ENCODE measurements at regions of chr7 and their contacts with region 1.

Region 1: GRCh38 chr7:28020302-28020940 is 160.2 kb downstream of the JAZF1 start:
- DNase-seq: peak; percentile 73
- H3K4me3 ChIP-seq: no peak overlapping the region
- H3K27ac ChIP-seq: no peak overlapping the region
- H3K4me1 ChIP-seq: peaks cover 6% of the 10 kb centered on the region
- H3K27me3 ChIP-seq: no peaks in the 10 kb centered on the region
- CTCF ChIP-seq: peak; percentile 89 to 92

Region 2: DNA sequence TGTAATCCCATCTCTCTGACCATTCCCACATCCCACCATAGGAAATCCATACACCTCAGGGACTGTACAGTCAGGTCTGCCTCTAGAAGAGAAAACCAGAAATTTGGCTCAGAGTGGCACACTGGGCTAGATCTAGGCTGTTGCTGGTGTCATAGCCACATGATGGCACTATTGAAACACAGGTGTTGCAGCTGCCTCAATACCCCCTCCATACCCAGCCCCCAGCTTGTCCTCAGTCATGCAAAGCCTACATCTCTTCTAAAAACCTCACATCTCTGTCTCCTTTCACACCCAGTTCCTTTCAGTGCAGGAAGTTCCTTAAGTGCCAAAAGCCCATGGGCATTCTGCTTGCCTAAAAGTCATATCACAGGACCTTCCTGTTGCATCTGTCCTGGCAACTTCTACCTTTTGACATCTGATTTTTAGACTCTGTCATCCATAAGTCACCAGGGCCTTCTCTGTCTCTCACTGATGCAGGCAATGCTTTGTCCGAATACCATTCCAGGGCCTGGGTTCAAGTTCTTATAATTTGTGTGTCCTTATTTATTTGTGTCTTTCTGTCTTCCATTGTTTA is 330.7 kb before region 1 on chr7:
- CTCF ChIA-PET with region 1: no interaction called
- dilution Hi-C with region 1: no loop called
- in situ Hi-C with region 1: no loop called
- intact Hi-C with region 1: loop called (anchors 1 kb)
- DNase-seq: peak; percentile 32
- H3K4me3 ChIP-seq: no peak overlapping the region
- H3K27ac ChIP-seq: no peak overlapping the region
- H3K4me1 ChIP-seq: peaks cover 6% of the 10 kb centered on the region
- H3K27me3 ChIP-seq: no peaks in the 10 kb centered on the region
- CTCF ChIP-seq: peak; percentile 40 to 60

Region 3: GRCh38 chr7:27745064-27745583 is 275.3 kb before region 1 on chr7:
- CTCF ChIA-PET with region 1: no interaction called
- dilution Hi-C with region 1: no loop called
- in situ Hi-C with region 1: no loop called
- intact Hi-C with region 1: loop called (anchors 1 kb)
- DNase-seq: peak; percentile 58
- H3K4me3 ChIP-seq: peak overlapping the region in 2 of 3 experiments; percentile 1 to 30
- H3K27ac ChIP-seq: peak overlapping the region; percentile 43
- H3K4me1 ChIP-seq: peaks cover 8% of the 10 kb centered on the region
- H3K27me3 ChIP-seq: no peaks in the 10 kb centered on the region
- CTCF ChIP-seq: peak; percentile 80 to 92

Region 4: DNA sequence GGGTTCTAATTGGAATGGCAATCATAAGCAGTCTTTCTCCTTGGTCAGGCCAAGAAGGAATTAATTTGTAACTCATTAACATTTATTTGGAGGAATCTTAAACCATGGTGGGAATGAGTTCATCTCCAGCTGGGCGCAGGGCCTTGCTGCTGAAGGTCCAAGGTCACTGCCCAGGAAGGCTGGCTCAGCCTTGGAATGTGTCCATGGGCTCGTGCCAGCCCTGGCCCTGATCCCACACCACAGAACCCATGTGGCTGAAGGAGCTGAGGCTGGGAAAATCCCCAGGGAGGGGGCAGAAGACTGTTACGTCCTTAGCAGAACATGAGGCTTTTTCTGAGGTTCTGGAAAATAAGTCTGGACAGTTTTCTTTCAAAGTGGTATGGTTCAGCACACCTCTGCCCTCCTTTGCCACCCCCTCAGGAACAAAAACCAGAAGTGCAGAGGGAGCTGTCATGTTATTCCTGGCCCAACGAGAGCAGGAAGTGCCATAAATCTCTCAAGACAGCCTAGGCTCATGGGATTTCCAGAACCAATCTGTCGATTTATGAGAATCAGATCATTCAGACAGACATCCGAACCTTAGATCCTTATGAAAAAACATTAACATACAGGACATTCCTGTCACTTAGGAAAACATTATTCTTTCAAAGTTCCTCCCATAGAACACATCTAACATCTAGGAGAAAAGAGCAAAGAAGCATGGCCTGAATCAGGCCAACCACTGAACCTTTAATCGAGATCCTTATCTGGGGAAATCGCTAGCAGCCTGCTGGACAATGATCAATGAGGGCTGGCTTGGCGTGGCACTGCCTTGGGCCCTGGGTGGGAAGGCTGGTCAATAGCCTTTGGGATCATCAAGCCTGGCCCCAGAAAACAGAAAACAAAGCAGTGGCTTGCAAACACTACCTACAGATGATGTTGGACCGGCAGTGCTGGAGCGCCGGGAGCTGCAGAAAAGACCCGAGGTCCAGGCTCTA is 146.2 kb before region 1 on chr7:
- CTCF ChIA-PET with region 1: no interaction called
- dilution Hi-C with region 1: no loop called
- in situ Hi-C with region 1: no loop called
- intact Hi-C with region 1: no loop called
- DNase-seq: peak; percentile 34
- H3K4me3 ChIP-seq: no peak overlapping the region
- H3K27ac ChIP-seq: no peak overlapping the region
- H3K4me1 ChIP-seq: no peaks in the 10 kb centered on the region
- H3K27me3 ChIP-seq: no peaks in the 10 kb centered on the region
- CTCF ChIP-seq: no peak

Region 5: GRCh38 chr7:27921081-27921836 is 99.2 kb before region 1 on chr7:
- CTCF ChIA-PET with region 1: no interaction called
- dilution Hi-C with region 1: no loop called
- in situ Hi-C with region 1: no loop called
- intact Hi-C with region 1: loop called (anchors 2 kb)
- DNase-seq: peak; percentile 56
- H3K4me3 ChIP-seq: no peak overlapping the region
- H3K27ac ChIP-seq: no peak overlapping the region
- H3K4me1 ChIP-seq: peaks cover 23% of the 10 kb centered on the region
- H3K27me3 ChIP-seq: no peaks in the 10 kb centered on the region
- CTCF ChIP-seq: peak; percentile 32 to 55

Region 6: GRCh38 chr7:28067171-28067570 is 46.8 kb after region 1 on chr7:
- CTCF ChIA-PET with region 1: no interaction called
- dilution Hi-C with region 1: no loop called
- in situ Hi-C with region 1: no loop called
- intact Hi-C with region 1: no loop called
- DNase-seq: no peak
- H3K4me3 ChIP-seq: no peak overlapping the region
- H3K27ac ChIP-seq: no peak overlapping the region
- H3K4me1 ChIP-seq: peaks cover 8% of the 10 kb centered on the region
- H3K27me3 ChIP-seq: no peaks in the 10 kb centered on the region
- CTCF ChIP-seq: no peak

Region 7: DNA sequence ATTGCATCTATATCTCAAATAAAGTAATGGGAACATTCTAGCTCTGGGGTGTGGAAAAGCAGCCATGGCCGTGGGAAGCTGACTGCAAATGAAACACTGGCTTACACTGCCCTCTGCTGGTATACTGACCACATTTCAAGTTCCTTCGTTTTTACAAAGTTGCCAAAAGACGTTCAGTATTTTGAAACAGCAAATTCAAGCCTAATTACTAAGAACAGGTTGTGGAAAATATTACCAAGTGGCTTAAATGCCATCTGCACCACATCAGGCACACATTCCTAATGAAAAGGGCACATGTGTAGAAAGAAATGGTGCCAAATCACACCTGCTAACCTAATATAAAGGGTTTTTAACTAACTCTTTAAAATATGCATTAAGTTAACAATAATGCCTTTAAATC is 76.3 kb after region 1 on chr7:
- CTCF ChIA-PET with region 1: no interaction called
- dilution Hi-C with region 1: no loop called
- in situ Hi-C with region 1: no loop called
- intact Hi-C with region 1: loop called (anchors 1 kb)
- DNase-seq: no peak
- H3K4me3 ChIP-seq: no peak overlapping the region
- H3K27ac ChIP-seq: no peak overlapping the region
- H3K4me1 ChIP-seq: no peaks in the 10 kb centered on the region
- H3K27me3 ChIP-seq: no peaks in the 10 kb centered on the region
- CTCF ChIP-seq: peak; percentile 80 to 89

Region 8: GRCh38 chr7:28112883-28113540 is 92.6 kb after region 1 on chr7:
- CTCF ChIA-PET with region 1: no interaction called
- dilution Hi-C with region 1: no loop called
- in situ Hi-C with region 1: no loop called
- intact Hi-C with region 1: no loop called
- DNase-seq: no peak
- H3K4me3 ChIP-seq: no peak overlapping the region
- H3K27ac ChIP-seq: no peak overlapping the region
- H3K4me1 ChIP-seq: peaks cover 8% of the 10 kb centered on the region
- H3K27me3 ChIP-seq: no peaks in the 10 kb centered on the region
- CTCF ChIP-seq: no peak

Region 9: DNA sequence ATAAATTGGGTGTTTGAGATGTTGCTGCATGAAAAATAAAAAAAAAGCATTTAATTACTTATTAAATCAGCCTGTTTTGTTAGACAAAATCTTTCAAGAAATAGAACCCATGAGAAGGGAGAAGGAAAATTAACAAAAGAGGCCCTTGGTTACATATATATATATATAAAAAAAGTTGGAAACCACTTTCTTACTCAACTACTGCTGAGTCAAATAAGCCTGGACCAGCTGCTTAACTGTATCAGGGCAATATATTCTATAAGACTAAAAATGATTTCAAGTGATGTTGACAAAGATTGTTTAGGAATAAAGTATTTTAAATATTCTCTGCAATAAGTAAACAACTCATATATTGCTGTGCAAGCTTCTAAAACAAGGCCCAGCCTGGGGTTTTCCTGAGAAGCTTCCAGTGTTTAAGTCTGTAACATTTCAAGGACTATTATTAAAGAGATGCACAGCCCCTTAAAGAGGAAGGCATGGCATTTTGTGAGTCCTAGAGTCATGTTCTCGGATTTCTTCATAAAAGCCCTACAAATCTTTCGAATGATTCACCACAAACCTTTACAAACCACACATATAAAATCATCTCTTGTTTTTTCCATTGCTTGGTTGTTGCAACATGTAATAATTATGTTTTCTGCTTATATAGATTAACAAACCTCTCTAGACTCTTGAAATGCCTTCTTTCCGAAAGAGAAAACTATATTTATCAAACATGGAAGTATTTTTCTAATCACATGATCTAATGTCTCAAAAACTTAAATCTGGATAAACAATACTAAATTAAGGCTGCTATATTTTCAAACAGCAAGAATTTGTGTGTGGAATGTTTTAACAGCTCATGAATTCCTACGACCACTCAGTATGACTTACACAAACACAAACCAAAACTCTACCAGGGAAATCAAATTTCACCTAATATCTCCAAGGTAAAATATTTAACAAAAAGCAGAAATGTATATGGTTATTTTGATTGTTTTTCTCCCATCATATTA is 145.8 kb after region 1 on chr7:
- CTCF ChIA-PET with region 1: no interaction called
- dilution Hi-C with region 1: no loop called
- in situ Hi-C with region 1: no loop called
- intact Hi-C with region 1: no loop called
- DNase-seq: peak; percentile 68
- H3K4me3 ChIP-seq: no peak overlapping the region
- H3K27ac ChIP-seq: no peak overlapping the region
- H3K4me1 ChIP-seq: peaks cover 17% of the 10 kb centered on the region
- H3K27me3 ChIP-seq: no peaks in the 10 kb centered on the region
- CTCF ChIP-seq: no peak

Measured in mammary epithelial cell (primary cell).